ENCODE measurements at regions of chr15 and their contacts with region 1.

Region 1: GRCh38 chr15:67863442-67863987 is 23.7 kb upstream of the RNU6-1 start:
- DNase-seq: peak; percentile 75 to 83 (median 80)
- ATAC-seq: peak; percentile 96
- H3K4me3 ChIP-seq: no peak overlapping the region
- H3K27ac ChIP-seq: no peak overlapping the region
- H3K4me1 ChIP-seq: peaks cover 12% of the 10 kb centered on the region
- H3K27me3 ChIP-seq: no peaks in the 10 kb centered on the region
- CTCF ChIP-seq: peak; percentile 82 to 95 (median 93)
- POLR2A ChIP-seq: no peak

Region 2: GRCh38 chr15:68053701-68054627 is 190.4 kb after region 1 on chr15 and contains the start of gene PIAS1:
- intact Hi-C with region 1: loop called (anchors 10 kb)
- DNase-seq: peak; percentile 95 to 97 (median 95)
- ATAC-seq: peak; percentile 99
- H3K4me3 ChIP-seq: peak within 1 kb of the TSS; percentile 96 to 100
- H3K27ac ChIP-seq: peak within 1 kb of the TSS; percentile 84 to 97 (median 93)
- H3K4me1 ChIP-seq: peaks cover 34% of the 10 kb centered on the region
- H3K27me3 ChIP-seq: no peaks in the 10 kb centered on the region
- CTCF ChIP-seq: peak in 2 of 7 experiments; percentile 4 to 12
- POLR2A ChIP-seq: peak; percentile 81 to 95 (median 93)
- total RNA-seq, gene PIAS1: 24.1 to 63.3 TPM

Region 3: DNA sequence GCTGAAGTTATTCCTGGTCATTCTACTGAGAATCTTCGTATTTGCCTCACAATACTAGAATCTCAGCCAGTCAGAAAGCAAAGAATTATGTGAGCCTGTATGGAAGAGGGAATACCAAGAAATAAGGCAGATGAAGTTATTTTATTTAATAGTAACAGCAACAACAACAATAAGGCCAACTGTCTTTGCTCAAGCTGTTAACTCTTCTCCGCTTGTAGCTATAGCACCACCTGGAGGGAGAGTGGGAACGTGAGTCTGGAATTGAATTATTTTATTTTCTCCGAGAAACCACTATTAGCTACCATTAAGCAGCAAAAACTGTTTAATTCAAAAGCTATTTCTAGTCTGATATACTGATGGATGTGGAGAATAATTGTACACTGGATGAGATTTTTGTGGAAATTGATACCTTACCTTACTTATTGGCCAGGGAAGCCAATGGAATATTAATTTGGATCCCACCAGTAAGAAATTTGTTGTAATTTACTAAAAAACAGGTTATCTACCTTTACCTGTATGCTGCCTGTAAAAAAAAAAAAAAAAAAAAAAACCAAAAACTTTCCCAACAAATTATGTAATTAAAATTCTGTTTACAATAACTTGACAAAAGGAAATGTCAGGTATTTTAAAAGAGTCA is 291.5 kb after region 1 on chr15:
- intact Hi-C with region 1: loop called (anchors 5 kb)
- DNase-seq: peak; percentile 43 to 65 (median 61)
- ATAC-seq: no peak
- H3K4me3 ChIP-seq: no peak overlapping the region
- H3K27ac ChIP-seq: no peak overlapping the region
- H3K4me1 ChIP-seq: peaks cover 18% of the 10 kb centered on the region
- H3K27me3 ChIP-seq: no peaks in the 10 kb centered on the region
- CTCF ChIP-seq: peak; percentile 34 to 90 (median 83)
- POLR2A ChIP-seq: no peak